ENCODE measurements at regions of chr2 and their contacts with region 1.

Region 1: GRCh38 chr2:189412330-189412953 is 28.8 kb upstream of the WDR75 start:
- DNase-seq: peak in 1 of 2 experiments; percentile 63
- H3K4me3 ChIP-seq: no peak overlapping the region
- H3K4me3 Mint-ChIP-seq: no peak overlapping the region
- H3K27ac Mint-ChIP-seq: no peak overlapping the region
- H3K4me1 ChIP-seq: peaks cover 16% of the 10 kb centered on the region
- H3K4me1 Mint-ChIP-seq: no peaks in the 10 kb centered on the region
- H3K27me3 ChIP-seq: no peaks in the 10 kb centered on the region
- H3K27me3 Mint-ChIP-seq: no peaks in the 10 kb centered on the region
- CTCF ChIP-seq: peak; percentile 71 to 74

Region 2: DNA sequence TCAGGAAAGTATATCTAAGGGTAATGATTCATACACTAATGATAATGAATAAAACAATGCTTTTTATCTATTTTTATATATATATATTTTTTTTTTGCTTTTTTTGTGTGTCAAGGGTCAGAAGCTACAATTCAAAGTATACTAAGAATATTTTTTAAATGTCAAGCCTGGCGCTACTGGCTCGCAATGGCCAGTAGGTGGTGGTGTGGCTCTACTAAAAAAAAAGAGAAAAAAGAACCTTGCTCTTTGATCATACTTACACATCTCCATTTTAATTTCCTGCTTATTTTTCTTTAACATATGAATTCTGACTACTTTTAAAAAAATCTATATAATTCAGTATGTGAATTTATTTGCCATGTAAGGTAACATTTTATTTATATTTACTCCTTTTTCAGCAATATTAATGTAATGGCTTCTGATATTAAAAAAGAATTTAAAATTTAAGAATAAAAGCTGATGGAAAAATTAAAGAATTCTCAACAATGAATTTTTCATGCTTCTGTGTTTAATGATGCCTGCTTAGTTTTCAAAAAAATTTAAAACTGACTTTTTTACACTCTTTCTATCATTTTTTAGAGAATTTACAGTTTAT is 887.8 kb before region 1 on chr2:
- CTCF ChIA-PET with region 1: no interaction called
- POLR2A ChIA-PET with region 1: no interaction called
- intact Hi-C with region 1: loop called (anchors 1 kb)
- DNase-seq: peak in 1 of 2 experiments; percentile 63
- H3K4me3 ChIP-seq: no peak overlapping the region
- H3K4me3 Mint-ChIP-seq: no peak overlapping the region
- H3K27ac Mint-ChIP-seq: no peak overlapping the region
- H3K4me1 ChIP-seq: no peaks in the 10 kb centered on the region
- H3K4me1 Mint-ChIP-seq: peaks cover 11% of the 10 kb centered on the region
- H3K27me3 ChIP-seq: no peaks in the 10 kb centered on the region
- H3K27me3 Mint-ChIP-seq: no peaks in the 10 kb centered on the region
- CTCF ChIP-seq: peak; percentile 76 to 79

Region 3: GRCh38 chr2:188983427-188984064 is 428.9 kb before region 1 on chr2:
- CTCF ChIA-PET with region 1: interaction called, 3 read pairs
- POLR2A ChIA-PET with region 1: no interaction called
- intact Hi-C with region 1: loop called (anchors 1 kb)
- DNase-seq: peak in 1 of 2 experiments; percentile 42
- H3K4me3 ChIP-seq: no peak overlapping the region
- H3K4me3 Mint-ChIP-seq: no peak overlapping the region
- H3K27ac Mint-ChIP-seq: no peak overlapping the region
- H3K4me1 ChIP-seq: peaks cover 4% of the 10 kb centered on the region; the same call in 1 of the 2 replicates
- H3K4me1 Mint-ChIP-seq: peaks cover 7% of the 10 kb centered on the region
- H3K27me3 ChIP-seq: no peaks in the 10 kb centered on the region
- H3K27me3 Mint-ChIP-seq: no peaks in the 10 kb centered on the region
- CTCF ChIP-seq: peak; percentile 63 to 67

Region 4: GRCh38 chr2:189115126-189115525 is 297.3 kb before region 1 on chr2:
- CTCF ChIA-PET with region 1: no interaction called
- POLR2A ChIA-PET with region 1: no interaction called
- intact Hi-C with region 1: loop called (anchors 5 kb)
- DNase-seq: no peak
- H3K4me3 ChIP-seq: no peak overlapping the region
- H3K4me3 Mint-ChIP-seq: no peak overlapping the region
- H3K27ac Mint-ChIP-seq: no peak overlapping the region
- H3K4me1 ChIP-seq: peaks cover 13% of the 10 kb centered on the region; the same call in 1 of the 2 replicates
- H3K4me1 Mint-ChIP-seq: peaks cover 12% of the 10 kb centered on the region
- H3K27me3 ChIP-seq: no peaks in the 10 kb centered on the region
- H3K27me3 Mint-ChIP-seq: no peaks in the 10 kb centered on the region
- CTCF ChIP-seq: no peak

Region 5: DNA sequence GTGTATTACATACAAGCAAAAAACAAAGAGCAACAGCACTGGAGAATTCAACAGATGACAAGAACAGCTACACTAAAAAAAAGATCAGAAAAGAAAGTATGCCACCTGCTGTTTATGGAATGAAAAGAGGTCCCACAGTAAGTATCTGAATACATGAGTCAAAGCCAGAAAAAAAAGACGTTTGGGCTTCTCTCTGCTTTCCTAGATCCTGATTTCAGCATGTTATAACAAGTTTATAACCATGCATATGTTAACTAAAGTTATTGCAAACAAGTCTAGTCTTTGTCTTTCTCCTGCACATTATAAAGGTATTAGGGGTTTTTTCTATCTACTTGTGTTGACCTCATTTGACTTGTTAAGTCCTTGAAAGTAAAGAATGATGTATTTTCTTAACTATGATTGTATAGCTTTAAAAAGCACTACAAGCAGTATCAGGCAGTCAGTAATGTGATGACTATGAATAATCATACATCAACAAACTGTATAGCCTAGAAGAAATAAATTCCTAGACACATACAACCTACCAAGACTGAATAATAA is 124.4 kb before region 1 on chr2:
- CTCF ChIA-PET with region 1: interaction called, 5 read pairs
- POLR2A ChIA-PET with region 1: no interaction called
- intact Hi-C with region 1: loop called (anchors 1 kb)
- DNase-seq: peak in 1 of 2 experiments; percentile 60
- H3K4me3 ChIP-seq: no peak overlapping the region
- H3K4me3 Mint-ChIP-seq: no peak overlapping the region
- H3K27ac Mint-ChIP-seq: no peak overlapping the region
- H3K4me1 ChIP-seq: peaks cover 5% of the 10 kb centered on the region; the same call in 1 of the 2 replicates
- H3K4me1 Mint-ChIP-seq: peaks cover 15% of the 10 kb centered on the region
- H3K27me3 ChIP-seq: no peaks in the 10 kb centered on the region
- H3K27me3 Mint-ChIP-seq: no peaks in the 10 kb centered on the region
- CTCF ChIP-seq: peak; percentile 38 to 64

Region 6: GRCh38 chr2:189318761-189319160 is 93.7 kb before region 1 on chr2:
- CTCF ChIA-PET with region 1: no interaction called
- POLR2A ChIA-PET with region 1: no interaction called
- intact Hi-C with region 1: no loop called
- DNase-seq: no peak
- H3K4me3 ChIP-seq: no peak overlapping the region
- H3K4me3 Mint-ChIP-seq: no peak overlapping the region
- H3K27ac Mint-ChIP-seq: no peak overlapping the region
- H3K4me1 ChIP-seq: no peaks in the 10 kb centered on the region
- H3K4me1 Mint-ChIP-seq: peaks cover 3% of the 10 kb centered on the region
- H3K27me3 ChIP-seq: no peaks in the 10 kb centered on the region
- H3K27me3 Mint-ChIP-seq: no peaks in the 10 kb centered on the region
- CTCF ChIP-seq: no peak

Region 7: GRCh38 chr2:189369566-189369965 is 42.9 kb before region 1 on chr2:
- CTCF ChIA-PET with region 1: no interaction called
- POLR2A ChIA-PET with region 1: no interaction called
- intact Hi-C with region 1: loop called (anchors 5 kb)
- DNase-seq: no peak
- H3K4me3 ChIP-seq: no peak overlapping the region
- H3K4me3 Mint-ChIP-seq: no peak overlapping the region
- H3K27ac Mint-ChIP-seq: no peak overlapping the region
- H3K4me1 ChIP-seq: peaks cover 24% of the 10 kb centered on the region
- H3K4me1 Mint-ChIP-seq: peaks cover 7% of the 10 kb centered on the region
- H3K27me3 ChIP-seq: no peaks in the 10 kb centered on the region
- H3K27me3 Mint-ChIP-seq: no peaks in the 10 kb centered on the region
- CTCF ChIP-seq: no peak

Measured in Caco-2 (cell line).